Heart left ventricle (tissue), 16 donors: ENCODE measurements at regions of chr1 and their contacts with region 1.

Region 1: DNA sequence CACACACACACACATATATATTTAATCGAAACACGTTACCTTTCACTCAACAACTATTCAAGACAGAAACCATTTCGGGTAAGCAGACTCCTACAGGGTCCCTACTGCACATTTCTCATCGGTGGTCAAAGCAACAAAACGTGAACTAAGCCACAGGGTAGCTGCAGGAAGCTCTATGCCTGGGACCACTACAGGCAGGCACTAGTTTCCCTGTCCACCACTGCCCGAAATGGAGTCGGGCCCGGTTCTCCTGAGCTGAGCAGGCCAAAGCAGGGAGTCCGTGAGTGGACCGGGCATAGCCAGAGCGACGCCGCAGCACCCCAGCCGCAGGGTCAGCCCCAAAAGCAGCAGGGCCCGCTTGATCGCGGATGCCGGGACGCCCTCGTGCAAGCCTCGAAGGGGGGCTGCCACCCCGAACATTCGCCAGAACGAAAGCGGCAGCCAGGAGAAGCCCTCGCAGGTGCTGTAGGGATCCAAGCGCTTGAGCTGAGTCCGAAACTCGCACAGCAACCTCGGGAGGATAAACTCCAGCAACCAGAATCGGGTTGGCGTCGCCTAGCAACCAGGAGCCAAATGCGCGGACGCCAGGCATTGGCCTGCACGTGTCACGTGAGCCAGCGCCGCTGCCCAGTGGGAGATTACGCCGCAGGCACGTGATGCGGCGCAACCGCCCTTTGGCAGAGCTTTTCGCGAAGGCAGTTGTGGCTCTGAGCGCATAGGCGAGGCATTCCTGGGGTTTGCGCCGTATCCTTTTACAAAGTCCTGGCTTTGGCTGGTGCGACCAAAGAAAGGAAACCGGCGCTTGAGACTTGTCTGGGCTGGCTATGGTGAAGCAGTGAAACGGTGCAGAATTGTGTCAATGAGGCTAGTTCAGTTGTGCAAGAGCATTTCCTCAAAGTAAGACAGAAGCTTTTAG is 13.9 kb upstream of the DDI2 start:
- DNase-seq: peak; percentile 97 to 99 (median 98)
- ATAC-seq: peak; percentile 98 to 99 (median 99)
- H3K4me3 ChIP-seq: peak overlapping the region; percentile 52 to 89 (median 72)
- H3K27ac ChIP-seq: peak overlapping the region in 11 of 12 donors; percentile 49 to 91 (median 79)
- H3K4me1 ChIP-seq: peaks cover 0 to 27% (median 14%) of the 10 kb centered on the region in 12 donors
- H3K27me3 ChIP-seq: no peaks in the 10 kb centered on the region
- CTCF ChIP-seq: no peak
- POLR2A ChIP-seq: peak in 1 of 2 donors; percentile 74

Region 2: GRCh38 chr1:15526490-15527339 is 76.6 kb before region 1 on chr1 and contains the start of gene DNAJC16:
- intact Hi-C with region 1: loop called in 1 of 10 experiments (anchors 5 kb)
- DNase-seq: peak; percentile 98 to 100 (median 100)
- ATAC-seq: peak; percentile 68 to 77 (median 73)
- H3K4me3 ChIP-seq: peak within 1 kb of the TSS; percentile 64 to 100 (median 76)
- H3K27ac ChIP-seq: peak within 1 kb of the TSS; percentile 68 to 99 (median 96)
- H3K4me1 ChIP-seq: peaks cover 8 to 43% (median 29%) of the 10 kb centered on the region in 12 donors
- H3K27me3 ChIP-seq: no peaks in the 10 kb centered on the region
- CTCF ChIP-seq: peak in 6 of 12 donors; percentile 6 to 45 (median 30)
- POLR2A ChIP-seq: peak in 1 of 2 donors; percentile 74
- total RNA-seq, gene DNAJC16: 11.9 to 22.8 (median 19.1) TPM

Region 3: DNA sequence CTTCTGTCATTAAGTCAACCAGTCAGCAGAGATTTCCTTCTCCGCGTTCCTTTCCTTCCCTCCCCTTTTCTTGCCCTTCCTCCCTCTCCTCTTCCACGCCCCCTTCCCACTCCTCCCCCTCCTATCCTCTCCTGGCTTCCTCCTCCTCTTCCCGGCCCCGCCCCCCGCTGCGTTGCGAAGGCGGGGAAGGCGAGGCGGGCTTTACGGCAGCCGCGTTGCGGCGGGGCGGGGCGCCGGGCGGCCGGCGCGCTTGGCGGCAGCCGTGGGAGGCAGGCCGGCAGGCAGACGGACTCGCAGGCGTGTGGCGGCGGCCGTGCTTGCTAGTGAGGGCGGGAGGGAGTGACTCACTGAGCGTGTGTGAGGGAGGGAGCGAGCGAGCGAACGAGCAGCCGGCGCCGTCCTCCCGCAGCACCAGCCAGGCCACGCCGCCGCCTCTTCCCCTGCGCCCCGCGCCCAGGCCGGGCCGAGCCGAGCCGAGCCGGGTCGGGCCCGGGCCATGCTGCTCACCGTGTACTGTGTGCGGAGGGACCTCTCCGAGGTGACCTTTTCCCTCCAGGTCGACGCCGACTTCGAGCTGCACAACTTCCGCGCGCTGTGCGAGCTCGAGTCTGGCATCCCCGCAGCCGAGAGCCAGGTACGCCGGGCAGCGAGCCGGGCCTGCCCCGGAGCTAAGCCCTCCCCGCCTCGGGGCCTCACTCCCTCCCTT is 14.0 kb after region 1 on chr1 and contains the start of gene DDI2:
- intact Hi-C with region 1: loop called in 2 of 10 experiments (anchors 1 to 2 kb)
- DNase-seq: peak; percentile 97 to 98 (median 97)
- ATAC-seq: peak; percentile 77 to 96 (median 94)
- H3K4me3 ChIP-seq: peak within 1 kb of the TSS; percentile 81 to 98 (median 92)
- H3K27ac ChIP-seq: peak within 1 kb of the TSS; percentile 82 to 99 (median 94)
- H3K4me1 ChIP-seq: peaks cover 8 to 51% (median 39%) of the 10 kb centered on the region in 12 donors
- H3K27me3 ChIP-seq: no peaks in the 10 kb centered on the region
- CTCF ChIP-seq: no peak
- POLR2A ChIP-seq: peak; percentile 51 to 94
- total RNA-seq, gene DDI2: 15.0 to 33.5 (median 24.5) TPM

Region 4: DNA sequence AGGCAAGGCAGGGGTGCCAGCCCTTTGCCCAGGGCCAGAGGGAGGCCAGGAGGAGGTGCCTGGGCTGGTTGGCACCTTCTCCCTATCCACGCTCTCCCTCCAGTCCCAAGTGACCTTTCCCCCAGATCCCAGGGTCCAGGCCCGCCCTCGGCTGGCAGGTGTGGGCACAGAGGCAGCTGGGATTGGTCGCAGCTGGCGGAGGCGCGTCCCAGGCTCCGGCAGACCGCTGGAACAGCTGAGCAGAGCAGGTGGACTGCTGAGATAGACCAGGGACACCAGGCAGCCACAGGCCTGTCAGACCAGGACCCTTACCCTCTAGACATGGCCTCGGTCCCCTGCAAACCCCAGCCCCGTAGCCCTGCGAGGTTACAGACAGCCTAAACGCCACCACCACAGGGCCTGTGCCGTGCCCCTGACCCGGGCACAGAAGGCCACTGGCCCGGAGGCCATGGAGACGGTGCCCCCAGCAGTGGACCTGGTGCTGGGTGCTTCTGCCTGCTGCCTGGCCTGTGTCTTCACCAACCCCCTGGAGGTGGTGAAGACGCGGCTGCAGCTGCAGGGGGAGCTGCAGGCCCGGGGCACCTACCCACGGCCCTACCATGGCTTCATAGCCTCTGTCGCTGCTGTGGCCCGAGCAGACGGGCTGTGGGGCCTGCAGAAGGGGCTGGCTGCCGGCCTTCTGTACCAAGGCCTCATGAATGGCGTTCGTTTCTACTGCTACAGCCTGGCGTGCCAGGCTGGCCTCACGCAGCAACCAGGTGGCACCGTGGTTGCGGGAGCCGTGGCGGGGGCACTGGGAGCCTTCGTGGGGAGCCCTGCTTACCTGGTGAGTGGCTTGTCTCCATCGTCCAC is 133.0 kb after region 1 on chr1 and contains the start of gene SLC25A34:
- intact Hi-C with region 1: loop called in 6 of 10 experiments (anchors 5 to 10 kb)
- DNase-seq: peak; percentile 80 to 93 (median 87)
- ATAC-seq: peak; percentile 82 to 92 (median 88)
- H3K4me3 ChIP-seq: peak within 1 kb of the TSS in 10 of 12 donors; percentile 14 to 47 (median 30)
- H3K27ac ChIP-seq: peak within 1 kb of the TSS; percentile 73 to 96 (median 84)
- H3K4me1 ChIP-seq: peaks cover 0 to 41% (median 17%) of the 10 kb centered on the region in 12 donors
- H3K27me3 ChIP-seq: no peaks in the 10 kb centered on the region
- CTCF ChIP-seq: peak in 1 of 12 donors; percentile 16
- POLR2A ChIP-seq: peak in 1 of 2 donors; percentile 48
- total RNA-seq, gene SLC25A34: 4.8 to 71.2 (median 17.8) TPM

Region 5: DNA sequence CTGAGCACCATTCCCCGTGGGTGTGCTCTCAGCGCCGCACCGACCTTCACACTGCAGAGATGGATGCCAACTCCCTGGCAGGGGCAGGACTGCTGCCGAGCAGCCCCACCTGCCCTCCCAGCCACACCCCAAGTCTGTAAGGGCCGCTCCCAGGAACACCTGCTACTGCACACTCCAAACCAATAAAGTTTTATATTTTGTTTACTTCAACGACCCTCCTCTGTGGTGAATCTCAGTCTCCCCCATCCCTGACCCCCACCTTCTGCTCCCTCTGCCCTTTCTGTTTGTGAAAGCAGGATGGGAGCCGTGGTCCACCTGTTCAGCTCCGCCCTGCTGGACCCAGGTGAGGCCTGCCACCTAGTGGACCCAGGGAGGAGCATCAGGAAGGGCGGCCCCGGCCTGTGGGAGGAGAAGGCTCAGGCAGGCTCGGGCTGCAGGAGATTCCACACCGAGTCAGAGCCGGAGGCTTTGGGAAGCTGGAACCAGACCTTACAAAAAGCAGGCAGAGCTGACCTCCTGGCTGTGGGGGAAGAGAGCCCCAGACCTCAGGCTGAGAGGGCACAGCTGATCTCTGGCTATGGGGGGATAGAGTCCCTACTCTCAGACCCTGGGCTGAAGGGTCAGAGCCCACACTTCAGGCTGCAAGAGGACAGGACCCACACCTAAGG is 138.0 kb after region 1 on chr1:
- intact Hi-C with region 1: loop called in 6 of 10 experiments (anchors 5 to 10 kb)
- DNase-seq: peak; percentile 69 to 89 (median 72)
- ATAC-seq: peak; percentile 62 to 81 (median 75)
- H3K4me3 ChIP-seq: no peak overlapping the region
- H3K27ac ChIP-seq: no peak overlapping the region
- H3K4me1 ChIP-seq: peaks cover 0 to 29% (median 5%) of the 10 kb centered on the region in 12 donors
- H3K27me3 ChIP-seq: no peaks in the 10 kb centered on the region
- CTCF ChIP-seq: peak; percentile 67 to 82 (median 72)
- POLR2A ChIP-seq: no peak

Region 6: GRCh38 chr1:15757575-15758393 is 154.5 kb after region 1 on chr1:
- intact Hi-C with region 1: loop called in 1 of 10 experiments (anchors 10 kb)
- DNase-seq: peak in 2 of 5 donors; percentile 52 to 55
- ATAC-seq: peak in 3 of 4 donors; percentile 2 to 8 (median 3)
- H3K4me3 ChIP-seq: peak overlapping the region in 10 of 12 donors; percentile 66 to 95 (median 72)
- H3K27ac ChIP-seq: peak overlapping the region in 9 of 12 donors; percentile 37 to 87 (median 82)
- H3K4me1 ChIP-seq: peaks cover 0 to 57% (median 41%) of the 10 kb centered on the region in 12 donors
- H3K27me3 ChIP-seq: peaks cover 0 to 56% (median 3%) of the 10 kb centered on the region in 9 donors
- CTCF ChIP-seq: no peak
- POLR2A ChIP-seq: no peak

Region 7: GRCh38 chr1:15775706-15776105 is 172.4 kb after region 1 on chr1:
- intact Hi-C with region 1: no loop called
- DNase-seq: no peak
- ATAC-seq: no peak
- H3K4me3 ChIP-seq: no peak overlapping the region
- H3K27ac ChIP-seq: no peak overlapping the region
- H3K4me1 ChIP-seq: peaks cover 0 to 4% (median 0%) of the 10 kb centered on the region in 12 donors
- H3K27me3 ChIP-seq: no peaks in the 10 kb centered on the region
- CTCF ChIP-seq: no peak
- POLR2A ChIP-seq: no peak

Region 8: DNA sequence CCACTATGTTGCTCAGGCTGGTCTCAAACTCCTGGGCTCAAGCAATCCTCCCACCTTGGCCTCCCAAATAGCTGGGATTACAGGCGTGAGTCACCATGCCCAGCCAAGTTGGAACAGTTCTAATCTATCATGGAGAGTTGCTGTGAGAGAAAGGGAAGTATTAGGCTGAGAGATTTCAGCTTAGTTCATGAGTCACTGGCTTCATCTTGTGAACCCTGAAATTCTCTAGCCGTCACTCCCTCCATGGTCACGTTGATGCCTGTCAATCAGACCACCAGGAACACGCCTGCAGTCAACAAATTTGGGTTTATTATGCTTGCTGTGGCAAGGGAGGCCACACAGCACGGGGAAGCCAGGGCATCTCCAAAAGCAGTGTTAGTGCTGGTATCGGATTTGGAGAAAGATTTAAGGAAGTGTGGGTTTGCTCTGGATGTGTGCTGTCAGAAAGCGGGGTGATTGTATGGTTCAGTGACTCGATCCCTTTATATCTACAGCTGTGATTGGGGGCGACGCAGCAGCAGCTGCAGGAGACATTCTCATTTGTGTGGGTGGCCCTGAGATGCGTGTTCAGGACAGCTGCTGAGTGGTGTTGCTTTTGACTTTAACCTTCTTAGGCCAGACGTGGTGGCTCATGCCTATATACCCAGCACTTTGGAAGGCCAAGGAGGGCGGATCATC is 185.5 kb after region 1 on chr1:
- intact Hi-C with region 1: no loop called
- DNase-seq: no peak
- ATAC-seq: no peak
- H3K4me3 ChIP-seq: no peak overlapping the region
- H3K27ac ChIP-seq: no peak overlapping the region
- H3K4me1 ChIP-seq: peaks cover 0 to 17% (median 6%) of the 10 kb centered on the region in 12 donors
- H3K27me3 ChIP-seq: no peaks in the 10 kb centered on the region
- CTCF ChIP-seq: no peak
- POLR2A ChIP-seq: no peak